Heart right ventricle (tissue), 16 donors: ENCODE measurements at regions of chr1 and their contacts with region 1.

Region 1: DNA sequence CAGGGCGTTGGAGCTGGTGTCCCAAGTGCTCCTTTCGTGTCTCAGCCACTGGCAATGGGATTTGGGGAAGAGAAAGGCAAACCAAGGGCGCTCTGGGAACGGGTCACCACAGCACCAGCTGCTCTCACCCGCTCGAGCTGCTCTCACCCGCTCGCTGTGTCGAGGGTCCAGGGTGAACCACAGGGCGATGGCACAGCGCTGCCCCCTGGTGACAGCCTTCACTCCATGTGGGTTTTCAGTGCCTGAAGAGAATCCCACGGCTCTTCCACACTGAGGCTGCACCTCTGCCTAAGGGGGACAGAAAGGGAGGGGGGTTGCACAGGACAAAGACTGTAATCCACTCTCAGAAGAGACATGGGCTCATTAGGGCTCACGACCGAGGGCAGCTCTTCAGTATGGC is 7.1 kb upstream of the CLDN19 start:
- DNase-seq: peak; percentile 36 to 52
- ATAC-seq: peak in 7 of 8 donors; percentile 57 to 74 (median 66)
- H3K4me3 ChIP-seq: no peak overlapping the region
- H3K27ac ChIP-seq: no peak overlapping the region
- H3K4me1 ChIP-seq: peaks cover 0 to 16% (median 0%) of the 10 kb centered on the region in 9 donors
- H3K27me3 ChIP-seq: no peaks in the 10 kb centered on the region
- CTCF ChIP-seq: peak; percentile 34 to 71 (median 66)

Region 2: GRCh38 chr1:42146626-42147320 is 600.4 kb before region 1 on chr1:
- intact Hi-C with region 1: loop called in 3 of 10 experiments (anchors 10 kb)
- DNase-seq: peak; percentile 62 to 68
- ATAC-seq: peak; percentile 34 to 82 (median 68)
- H3K4me3 ChIP-seq: no peak overlapping the region
- H3K27ac ChIP-seq: no peak overlapping the region
- H3K4me1 ChIP-seq: peaks cover 0 to 8% (median 0%) of the 10 kb centered on the region in 9 donors
- H3K27me3 ChIP-seq: peaks cover 0 to 37% (median 18%) of the 10 kb centered on the region in 7 donors
- CTCF ChIP-seq: peak; percentile 69 to 81 (median 76)

Region 3: DNA sequence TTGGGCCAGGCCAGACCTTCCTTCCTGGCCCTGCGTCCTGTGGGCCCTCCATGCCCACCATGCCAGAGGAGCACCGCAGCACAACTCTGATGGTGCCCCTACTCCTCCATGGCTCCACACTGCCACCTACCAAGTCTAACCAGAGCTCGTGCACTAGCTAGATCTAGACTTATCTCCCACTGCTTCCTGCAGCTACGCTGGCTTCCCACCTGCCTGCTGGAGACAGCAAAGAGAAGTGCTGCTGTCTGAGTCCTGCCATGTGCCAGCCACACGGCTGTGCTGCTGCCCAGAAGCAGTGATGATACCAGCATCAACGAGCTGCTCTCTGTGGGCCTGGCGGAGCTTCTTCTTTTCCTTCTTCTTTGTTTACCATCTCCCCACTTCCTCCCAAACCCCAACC is 589.5 kb before region 1 on chr1:
- intact Hi-C with region 1: loop called in 2 of 10 experiments (anchors 10 kb)
- DNase-seq: no peak
- ATAC-seq: no peak
- H3K4me3 ChIP-seq: no peak overlapping the region
- H3K27ac ChIP-seq: no peak overlapping the region
- H3K4me1 ChIP-seq: peaks cover 0 to under 1% (median 0%) of the 10 kb centered on the region in 9 donors
- H3K27me3 ChIP-seq: no peaks in the 10 kb centered on the region
- CTCF ChIP-seq: no peak

Region 4: DNA sequence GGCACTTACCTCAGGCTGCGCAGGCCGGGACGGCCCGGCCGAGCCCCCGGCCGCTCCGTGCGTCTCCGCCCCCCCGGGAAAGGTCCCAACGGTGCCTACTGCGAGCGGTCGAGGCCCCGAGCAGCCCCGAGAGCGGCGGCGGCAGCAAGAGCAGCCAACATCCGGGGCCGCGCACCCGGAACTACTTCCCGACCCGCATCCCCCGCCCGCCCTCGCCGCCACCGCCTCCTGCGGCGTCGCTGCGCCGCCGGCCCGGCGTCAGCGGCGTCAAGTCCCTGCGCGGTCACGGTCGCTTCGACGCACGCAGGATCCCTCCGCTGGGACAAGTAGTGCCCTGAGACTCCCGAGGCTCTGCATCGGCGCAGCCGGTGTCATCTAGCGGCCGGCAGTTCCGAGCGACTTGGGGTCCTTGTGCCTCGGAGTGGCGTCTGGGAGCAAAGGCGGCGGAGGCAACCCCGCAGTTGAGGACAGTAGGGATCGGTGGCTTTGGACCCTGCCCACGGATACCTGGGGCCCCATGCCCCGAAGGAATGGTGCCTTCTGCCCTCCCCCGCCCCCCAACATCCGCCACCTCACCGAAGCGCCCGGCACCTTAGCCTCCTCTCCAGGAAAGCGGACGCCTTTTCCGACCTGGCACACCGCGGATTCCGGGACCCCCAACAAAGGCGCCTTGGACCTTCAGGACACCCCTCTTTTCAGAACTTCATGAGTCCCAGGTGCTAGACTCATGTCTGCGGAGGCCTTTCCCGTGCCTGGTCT is 411.9 kb before region 1 on chr1 and contains the start of gene FOXJ3:
- intact Hi-C with region 1: loop called in 5 of 10 experiments (anchors 10 kb)
- DNase-seq: peak; percentile 94 to 95
- ATAC-seq: peak; percentile 89 to 97 (median 95)
- H3K4me3 ChIP-seq: peak within 1 kb of the TSS; percentile 68 to 98 (median 92)
- H3K27ac ChIP-seq: peak within 1 kb of the TSS; percentile 88 to 97 (median 94)
- H3K4me1 ChIP-seq: peaks cover 4 to 51% (median 33%) of the 10 kb centered on the region in 9 donors
- H3K27me3 ChIP-seq: no peaks in the 10 kb centered on the region
- CTCF ChIP-seq: peak in 2 of 9 donors; percentile 1 to 5
- total RNA-seq, gene FOXJ3: 34.2 to 50.0 (median 41.6) TPM

Region 5: DNA sequence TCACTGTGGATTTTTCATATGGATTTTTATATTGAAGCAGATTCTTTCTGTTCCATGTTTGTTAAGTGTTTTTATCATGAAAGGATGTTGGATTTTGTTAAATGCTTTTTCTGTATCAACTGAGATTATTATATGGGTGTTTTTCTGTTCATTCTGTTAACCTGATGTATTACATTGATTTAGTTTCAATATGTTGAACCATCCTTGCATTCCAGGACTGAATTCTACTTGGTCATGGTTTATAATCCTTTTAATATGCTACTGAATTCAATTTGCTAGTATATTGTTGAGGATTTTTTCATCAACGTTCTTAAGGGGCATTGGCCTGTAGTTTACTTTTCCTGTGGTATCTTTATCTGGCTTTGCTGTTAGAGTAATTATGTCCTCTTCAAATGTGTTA is 228.2 kb before region 1 on chr1:
- intact Hi-C with region 1: loop called in 1 of 10 experiments (anchors 5 kb)
- DNase-seq: no peak
- ATAC-seq: no peak
- H3K4me3 ChIP-seq: no peak overlapping the region
- H3K27ac ChIP-seq: no peak overlapping the region
- H3K4me1 ChIP-seq: no peaks in the 10 kb centered on the region
- H3K27me3 ChIP-seq: no peaks in the 10 kb centered on the region
- CTCF ChIP-seq: no peak

Region 6: DNA sequence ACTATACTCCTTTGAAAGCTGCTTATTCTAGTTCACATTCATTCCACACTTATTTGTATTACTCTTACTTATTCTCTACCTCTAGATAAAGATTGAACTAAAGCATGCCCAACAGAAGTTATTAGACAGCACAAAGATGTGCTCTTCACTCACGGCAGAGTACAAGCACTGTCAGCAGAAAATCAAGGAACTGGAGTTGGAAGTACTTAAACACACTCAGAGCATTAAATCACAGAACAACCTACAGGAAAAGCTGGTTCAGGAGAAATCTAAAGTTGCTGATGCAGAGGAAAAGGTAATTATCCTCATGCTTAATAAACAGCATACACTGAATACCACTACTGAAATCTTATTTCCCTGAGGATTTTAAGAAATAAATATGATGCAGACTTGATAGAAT is 170.2 kb before region 1 on chr1:
- intact Hi-C with region 1: loop called in 9 of 10 experiments (anchors 1 to 5 kb)
- DNase-seq: no peak
- ATAC-seq: no peak
- H3K4me3 ChIP-seq: no peak overlapping the region
- H3K27ac ChIP-seq: no peak overlapping the region
- H3K4me1 ChIP-seq: no peaks in the 10 kb centered on the region
- H3K27me3 ChIP-seq: no peaks in the 10 kb centered on the region
- CTCF ChIP-seq: no peak

Region 7: DNA sequence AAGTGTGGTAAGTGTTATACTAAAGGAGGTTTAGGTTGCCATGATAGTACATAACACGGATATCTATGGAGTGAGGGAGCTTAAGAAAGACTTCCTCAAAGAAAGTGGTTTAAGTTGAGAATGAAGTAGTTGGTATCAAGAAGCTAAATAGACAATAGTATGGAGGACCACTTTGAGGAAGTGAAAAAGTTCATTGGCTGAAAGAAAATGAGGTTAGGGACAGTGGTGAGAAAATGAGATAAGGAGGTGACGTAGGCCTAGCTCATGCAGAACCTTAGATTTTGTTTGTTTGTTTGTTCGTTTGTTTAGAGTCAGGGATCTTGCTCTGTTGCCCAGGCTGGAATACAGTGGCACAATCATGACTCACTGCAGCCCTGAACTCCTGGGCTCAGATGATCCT is 161.1 kb before region 1 on chr1:
- intact Hi-C with region 1: loop called in 2 of 10 experiments (anchors 5 kb)
- DNase-seq: no peak
- ATAC-seq: no peak
- H3K4me3 ChIP-seq: no peak overlapping the region
- H3K27ac ChIP-seq: no peak overlapping the region
- H3K4me1 ChIP-seq: no peaks in the 10 kb centered on the region
- H3K27me3 ChIP-seq: no peaks in the 10 kb centered on the region
- CTCF ChIP-seq: no peak

Region 8: DNA sequence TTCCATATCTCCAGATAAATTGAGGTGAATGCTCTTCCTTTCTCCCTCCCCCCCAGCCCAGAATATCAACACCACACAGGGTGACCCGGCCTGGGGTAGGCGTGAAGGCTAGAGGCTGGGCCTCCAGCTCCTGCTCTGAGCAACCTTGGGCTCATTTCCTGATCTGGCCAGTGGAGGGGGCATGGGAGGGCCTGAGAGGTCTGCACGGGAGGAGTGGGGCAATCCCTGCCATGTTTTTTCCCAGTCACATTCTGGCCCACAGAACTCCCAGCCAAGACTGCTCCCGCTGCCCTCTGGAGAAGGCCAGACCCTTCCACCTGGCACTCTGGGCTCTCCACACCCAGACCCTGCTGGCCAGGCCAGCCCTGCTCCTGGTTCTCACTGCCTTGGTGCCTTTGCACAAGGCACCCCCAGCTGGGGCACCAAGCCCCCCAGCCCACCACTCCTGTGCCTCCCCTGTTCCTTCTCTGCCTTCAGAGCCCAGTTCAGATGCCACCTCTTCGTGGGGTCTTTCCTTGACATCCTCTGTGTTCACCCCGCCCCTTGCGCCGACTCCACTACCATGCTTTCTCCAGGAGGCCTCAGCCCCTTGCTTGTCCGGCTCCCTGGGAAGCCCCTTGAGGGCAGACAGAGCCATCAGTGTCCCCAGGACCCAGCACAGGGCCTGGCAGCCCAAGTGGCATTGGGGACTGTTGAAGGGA is 10.8 kb before region 1 on chr1:
- intact Hi-C with region 1: no loop called
- DNase-seq: no peak
- ATAC-seq: peak in 2 of 8 donors; percentile 24 to 27
- H3K4me3 ChIP-seq: no peak overlapping the region
- H3K27ac ChIP-seq: no peak overlapping the region
- H3K4me1 ChIP-seq: peaks cover 0 to 15% (median 0%) of the 10 kb centered on the region in 9 donors
- H3K27me3 ChIP-seq: no peaks in the 10 kb centered on the region
- CTCF ChIP-seq: peak in 3 of 9 donors; percentile 5 to 21 (median 9)

Region 9: DNA sequence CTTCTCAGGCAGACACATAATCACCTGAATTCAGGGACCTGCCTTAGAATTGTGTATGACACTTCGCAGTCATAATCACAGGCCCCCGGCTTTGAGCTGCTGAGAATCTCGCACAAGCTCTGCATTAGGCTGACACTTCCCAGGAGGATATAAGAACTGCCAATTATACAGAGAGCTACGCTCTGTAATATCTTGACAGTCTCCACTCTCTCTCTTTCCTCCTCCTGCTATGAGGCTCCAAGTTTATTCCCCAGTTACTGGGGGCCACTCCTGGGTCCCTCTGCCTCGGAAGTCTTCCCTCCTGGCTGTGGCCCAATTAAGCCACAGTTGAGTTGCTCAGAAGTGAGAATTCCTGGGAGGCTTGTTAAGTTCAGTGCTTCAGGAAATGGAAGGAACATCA is 382.3 kb after region 1 on chr1:
- intact Hi-C with region 1: no loop called
- DNase-seq: no peak
- ATAC-seq: no peak
- H3K4me3 ChIP-seq: no peak overlapping the region
- H3K27ac ChIP-seq: no peak overlapping the region
- H3K4me1 ChIP-seq: no peaks in the 10 kb centered on the region
- H3K27me3 ChIP-seq: peaks cover 0 to 11% (median 0%) of the 10 kb centered on the region in 7 donors
- CTCF ChIP-seq: no peak